Activated B cell treated with CpG ODN at 0.5 μM for 24 hours (primary cell): ENCODE measurements at regions of chr20 and their contacts with region 1.

Region 1: GRCh38 chr20:17856024-17856564 is 112.5 kb downstream of the SNX5 start:
- DNase-seq: peak; percentile 56
- ATAC-seq: peak; percentile 90
- H3K4me3 Mint-ChIP-seq: peak overlapping the region; percentile 65
- H3K27ac Mint-ChIP-seq: peak overlapping the region; percentile 82
- H3K4me1 Mint-ChIP-seq: peaks cover 73% of the 10 kb centered on the region
- H3K27me3 Mint-ChIP-seq: no peaks in the 10 kb centered on the region
- CTCF ChIP-seq: no peak

Region 2: DNA sequence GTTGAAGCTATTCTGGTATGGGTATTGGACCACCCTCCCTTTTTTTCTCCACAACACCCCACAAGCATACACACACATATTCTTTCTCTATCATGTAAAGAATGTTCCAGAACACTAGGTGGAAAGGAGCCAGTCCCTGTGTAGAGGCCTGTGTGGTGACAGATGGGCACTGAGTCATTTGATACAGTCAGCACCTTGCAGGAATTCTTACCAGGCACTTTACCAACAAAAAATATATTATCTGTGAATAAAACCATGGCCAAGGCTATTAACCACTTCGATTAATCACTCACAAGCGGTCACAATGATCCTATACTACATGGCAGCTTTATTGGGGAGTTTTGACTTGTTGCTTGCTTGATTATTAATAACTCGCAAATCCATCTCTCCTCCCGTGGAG is 474.4 kb before region 1 on chr20:
- CTCF ChIA-PET with region 1: no interaction called
- POLR2A ChIA-PET with region 1: no interaction called
- intact Hi-C with region 1: no loop called
- DNase-seq: no peak
- ATAC-seq: no peak
- H3K4me3 Mint-ChIP-seq: no peak overlapping the region
- H3K27ac Mint-ChIP-seq: no peak overlapping the region
- H3K4me1 Mint-ChIP-seq: no peaks in the 10 kb centered on the region
- H3K27me3 Mint-ChIP-seq: peaks cover 9% of the 10 kb centered on the region
- CTCF ChIP-seq: no peak

Region 3: DNA sequence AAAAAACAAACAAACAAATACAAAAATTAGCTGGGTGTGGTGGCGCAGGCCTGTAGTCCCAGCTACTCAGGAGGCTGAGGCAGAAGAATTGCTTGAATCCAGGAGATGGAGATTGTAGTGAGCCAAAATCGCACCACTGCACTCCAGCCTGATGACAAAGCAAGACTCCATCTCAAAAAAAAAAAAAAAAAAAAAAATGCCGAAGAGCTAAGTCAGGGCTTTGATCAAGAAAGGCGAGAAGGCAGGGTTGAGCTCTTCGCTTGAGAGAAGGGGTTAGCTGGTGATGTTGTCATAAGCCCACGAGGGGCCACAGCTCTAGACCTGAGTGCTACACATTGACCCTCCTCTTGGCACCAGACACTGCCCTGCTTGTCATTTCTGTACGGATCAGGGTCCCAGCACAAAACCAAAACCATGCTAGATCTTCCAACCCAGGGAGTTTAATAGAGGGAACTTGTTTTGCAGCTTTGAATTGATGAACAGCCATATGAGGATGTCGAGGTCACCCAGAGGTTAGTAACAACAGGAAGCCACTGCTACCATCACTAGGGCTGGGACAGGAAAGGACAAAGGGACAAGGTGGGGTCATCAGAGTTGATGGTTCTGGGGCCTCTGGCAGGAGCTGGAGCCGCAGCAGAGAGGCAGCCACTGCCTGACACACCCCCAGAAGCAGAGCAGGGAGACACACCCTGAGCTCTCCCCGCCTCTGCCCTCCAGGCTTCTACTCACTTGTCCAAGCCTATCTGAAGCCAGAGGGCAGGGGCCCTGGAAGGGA is 10.2 kb before region 1 on chr20:
- CTCF ChIA-PET with region 1: no interaction called
- POLR2A ChIA-PET with region 1: interaction called, 3 read pairs
- intact Hi-C with region 1: loop called (anchors 1 kb)
- DNase-seq: no peak
- ATAC-seq: no peak
- H3K4me3 Mint-ChIP-seq: peak overlapping the region; percentile 6
- H3K27ac Mint-ChIP-seq: peak overlapping the region; percentile 1
- H3K4me1 Mint-ChIP-seq: peaks cover 77% of the 10 kb centered on the region
- H3K27me3 Mint-ChIP-seq: no peaks in the 10 kb centered on the region
- CTCF ChIP-seq: no peak

Region 4: GRCh38 chr20:17875106-17875980 is 19.2 kb after region 1 on chr20:
- CTCF ChIA-PET with region 1: interaction called, 5 read pairs
- POLR2A ChIA-PET with region 1: interaction called, 9 read pairs
- intact Hi-C with region 1: loop called (anchors 1 kb)
- DNase-seq: no peak
- ATAC-seq: no peak
- H3K4me3 Mint-ChIP-seq: no peak overlapping the region
- H3K27ac Mint-ChIP-seq: no peak overlapping the region
- H3K4me1 Mint-ChIP-seq: peaks cover 63% of the 10 kb centered on the region
- H3K27me3 Mint-ChIP-seq: peaks cover 1% of the 10 kb centered on the region
- CTCF ChIP-seq: no peak

Region 5: GRCh38 chr20:17898548-17898994 is 42.5 kb after region 1 on chr20:
- CTCF ChIA-PET with region 1: interaction called, 4 read pairs
- POLR2A ChIA-PET with region 1: interaction called, 3 read pairs
- intact Hi-C with region 1: loop called (anchors 1 kb)
- DNase-seq: no peak
- ATAC-seq: peak; percentile 78
- H3K4me3 Mint-ChIP-seq: no peak overlapping the region
- H3K27ac Mint-ChIP-seq: no peak overlapping the region
- H3K4me1 Mint-ChIP-seq: peaks cover 53% of the 10 kb centered on the region
- H3K27me3 Mint-ChIP-seq: peaks cover 16% of the 10 kb centered on the region
- CTCF ChIP-seq: peak; percentile 93

Region 6: GRCh38 chr20:17910828-17911294 is 54.8 kb after region 1 on chr20:
- CTCF ChIA-PET with region 1: no interaction called
- POLR2A ChIA-PET with region 1: no interaction called
- intact Hi-C with region 1: no loop called
- DNase-seq: no peak
- ATAC-seq: no peak
- H3K4me3 Mint-ChIP-seq: no peak overlapping the region
- H3K27ac Mint-ChIP-seq: no peak overlapping the region
- H3K4me1 Mint-ChIP-seq: no peaks in the 10 kb centered on the region
- H3K27me3 Mint-ChIP-seq: peaks cover 29% of the 10 kb centered on the region
- CTCF ChIP-seq: no peak